Activated CD4-positive, alpha-beta T cell treated with anti-CD3 and anti-CD28 coated beads, Interleukin-2, amount 10 ng/mL, durations not matched to agents 24 days and 14 days (primary cell): ENCODE measurements at regions of chr3 and their contacts with region 1.

Region 1: GRCh38 chr3:44338010-44338827 is at the start of gene TCAIM:
- DNase-seq: peak; percentile 99
- H3K4me3 Mint-ChIP-seq: peak within 1 kb of the TSS; percentile 100
- H3K27ac Mint-ChIP-seq: peak within 1 kb of the TSS; percentile 98
- H3K4me1 Mint-ChIP-seq: peaks cover 19% of the 10 kb centered on the region
- H3K27me3 Mint-ChIP-seq: peaks cover 10% of the 10 kb centered on the region
- total RNA-seq, gene TCAIM: 14.3 and 14.6 TPM in 2 replicates

Region 2: GRCh38 chr3:42804106-42804830 is 1534.0 kb before region 1 on chr3 and contains the start of gene HIGD1A:
- intact Hi-C with region 1: loop called (anchors 10 kb)
- DNase-seq: peak; percentile 98
- H3K4me3 Mint-ChIP-seq: peak within 1 kb of the TSS; percentile 99
- H3K27ac Mint-ChIP-seq: peak within 1 kb of the TSS; percentile 97
- H3K4me1 Mint-ChIP-seq: peaks cover 29% of the 10 kb centered on the region
- H3K27me3 Mint-ChIP-seq: peaks cover 34% of the 10 kb centered on the region
- total RNA-seq, gene HIGD1A: 88.6 and 91.6 TPM in 2 replicates

Region 3: GRCh38 chr3:44252332-44252959 is 85.8 kb before region 1 on chr3:
- intact Hi-C with region 1: no loop called
- DNase-seq: no peak
- H3K4me3 Mint-ChIP-seq: no peak overlapping the region
- H3K27ac Mint-ChIP-seq: no peak overlapping the region
- H3K4me1 Mint-ChIP-seq: no peaks in the 10 kb centered on the region
- H3K27me3 Mint-ChIP-seq: peaks cover 7% of the 10 kb centered on the region

Region 4: DNA sequence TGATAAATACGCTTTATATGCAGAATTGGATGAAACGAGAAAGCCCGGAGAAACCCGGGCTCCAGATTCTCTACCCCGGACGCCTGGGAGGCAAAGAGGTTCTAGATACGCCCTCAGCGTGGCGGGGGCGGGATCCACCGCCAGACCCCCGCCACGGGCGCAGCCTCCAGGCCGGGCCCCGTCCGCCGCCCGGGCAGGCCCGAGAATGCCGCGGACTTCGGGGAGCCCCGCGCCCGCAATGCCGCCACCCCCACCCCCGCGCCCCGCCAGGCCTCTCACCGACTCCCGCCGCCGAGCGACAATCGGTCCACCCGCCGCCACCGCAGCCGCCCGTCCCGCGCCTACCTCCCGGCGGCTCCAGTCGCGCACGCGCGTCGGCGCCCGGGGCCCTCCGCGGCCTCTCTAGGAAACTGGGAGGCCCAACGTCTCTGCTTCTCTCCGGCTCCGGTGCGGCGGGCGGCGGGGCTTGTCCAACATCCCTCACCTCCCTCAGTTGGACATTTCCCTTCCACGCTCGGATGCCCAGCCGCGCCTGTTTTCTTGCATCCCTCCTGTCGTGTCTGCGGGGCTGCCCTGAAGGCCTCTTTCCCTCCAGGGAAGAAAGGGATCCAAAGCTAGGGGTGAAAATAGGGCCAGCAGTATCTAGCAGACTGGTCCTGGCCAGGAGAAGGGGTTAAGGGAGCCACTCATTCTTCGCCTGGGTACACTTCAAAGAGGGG is 139.3 kb after region 1 on chr3 and contains the start of gene ZNF445:
- intact Hi-C with region 1: loop called (anchors 1 kb)
- DNase-seq: peak; percentile 94
- H3K4me3 Mint-ChIP-seq: peak within 1 kb of the TSS; percentile 94
- H3K27ac Mint-ChIP-seq: peak within 1 kb of the TSS; percentile 90
- H3K4me1 Mint-ChIP-seq: peaks cover 21% of the 10 kb centered on the region
- H3K27me3 Mint-ChIP-seq: no peaks in the 10 kb centered on the region
- total RNA-seq, gene ZNF445: 17.7 and 19.8 TPM in 2 replicates

Region 5: DNA sequence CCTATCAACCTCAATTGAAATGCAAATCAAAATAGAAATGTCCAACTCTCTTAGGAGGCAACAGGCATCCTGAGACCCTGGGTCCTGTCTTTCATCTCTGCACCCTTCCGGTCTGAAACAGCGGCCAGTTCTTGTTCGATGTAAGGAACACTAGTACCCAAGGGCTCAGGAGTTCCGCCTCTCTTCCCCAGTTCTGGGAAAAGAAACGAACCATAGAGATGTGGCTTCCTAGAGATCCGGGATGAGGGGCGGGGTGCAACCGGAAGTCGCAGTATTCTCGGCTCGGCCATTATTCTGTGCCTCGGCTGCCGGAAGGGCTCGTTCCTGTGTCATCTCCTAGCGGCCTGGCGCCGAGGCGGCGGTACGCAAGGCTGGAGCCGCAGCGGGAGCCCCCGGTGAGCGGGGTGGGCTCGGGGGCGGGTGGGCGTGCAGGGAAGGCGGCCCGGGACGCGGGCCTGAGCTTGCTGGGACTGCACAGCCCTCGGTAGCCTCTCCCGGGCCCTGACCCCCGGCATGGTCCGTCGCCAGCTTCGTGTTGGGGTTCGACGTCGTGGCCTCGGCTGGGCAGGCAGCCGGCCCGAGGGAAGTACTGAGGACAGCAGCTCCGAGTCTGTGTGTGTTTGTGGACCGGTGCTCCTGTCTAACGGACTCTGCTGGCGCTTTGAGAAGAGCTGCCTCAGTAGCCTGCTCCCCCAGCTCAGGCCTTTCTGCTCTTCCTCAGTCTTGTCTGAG is 286.7 kb after region 1 on chr3 and contains the start of gene ZNF197:
- intact Hi-C with region 1: loop called (anchors 5 kb)
- DNase-seq: peak; percentile 88
- H3K4me3 Mint-ChIP-seq: peak within 1 kb of the TSS; percentile 90
- H3K27ac Mint-ChIP-seq: peak within 1 kb of the TSS; percentile 81
- H3K4me1 Mint-ChIP-seq: peaks cover 14% of the 10 kb centered on the region
- H3K27me3 Mint-ChIP-seq: no peaks in the 10 kb centered on the region
- total RNA-seq, gene ZNF197: 10.5 and 10.7 TPM in 2 replicates

Region 6: GRCh38 chr3:44976002-44976815 is 638.0 kb after region 1 on chr3 and contains the starts of genes EXOSC7 and ZDHHC3:
- intact Hi-C with region 1: loop called (anchors 5 kb)
- DNase-seq: peak; percentile 95
- H3K4me3 Mint-ChIP-seq: peak within 1 kb of the TSS; percentile 98
- H3K27ac Mint-ChIP-seq: peak within 1 kb of the TSS; percentile 98
- H3K4me1 Mint-ChIP-seq: peaks cover 50% of the 10 kb centered on the region
- H3K27me3 Mint-ChIP-seq: no peaks in the 10 kb centered on the region
- total RNA-seq, gene EXOSC7: 95.5 and 97.9 TPM in 2 replicates
- total RNA-seq, gene ZDHHC3: 42.0 and 46.2 TPM in 2 replicates